Heart left ventricle (tissue), 16 donors: ENCODE measurements at regions of chr17 and their contacts with region 1.

Region 1: DNA sequence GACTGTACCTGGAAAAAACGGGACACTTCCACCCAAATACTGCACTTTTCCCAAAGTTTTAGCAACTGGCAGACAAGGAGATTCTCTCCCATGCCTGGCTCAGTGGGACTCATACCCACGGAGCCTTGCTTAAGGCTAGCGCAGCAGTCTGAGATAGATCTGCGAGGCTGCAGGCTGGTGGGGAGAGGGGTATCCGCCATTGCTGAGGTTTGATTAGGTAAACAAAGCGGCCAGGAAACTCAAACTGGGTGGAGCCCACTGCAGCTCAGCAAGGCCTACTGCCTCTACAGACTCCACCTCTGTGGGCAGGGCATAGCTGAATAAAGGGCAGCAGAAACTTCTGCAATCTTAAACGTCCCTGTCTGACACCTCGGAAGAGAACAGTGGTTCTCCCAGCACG is 44.8 kb downstream of the UTP18 start:
- DNase-seq: no peak
- ATAC-seq: no peak
- H3K4me3 ChIP-seq: no peak overlapping the region
- H3K27ac ChIP-seq: no peak overlapping the region
- H3K4me1 ChIP-seq: no peaks in the 10 kb centered on the region
- H3K27me3 ChIP-seq: no peaks in the 10 kb centered on the region
- CTCF ChIP-seq: no peak
- POLR2A ChIP-seq: no peak

Region 2: GRCh38 chr17:51351890-51352289 is 46.7 kb after region 1 on chr17:
- intact Hi-C with region 1: no loop called
- DNase-seq: peak in 1 of 5 donors; percentile 31
- ATAC-seq: peak in 1 of 4 donors; percentile 48
- H3K4me3 ChIP-seq: no peak overlapping the region
- H3K27ac ChIP-seq: no peak overlapping the region
- H3K4me1 ChIP-seq: peaks cover 0 to 3% (median 0%) of the 10 kb centered on the region in 12 donors
- H3K27me3 ChIP-seq: peaks cover 0 to 5% (median 0%) of the 10 kb centered on the region in 9 donors
- CTCF ChIP-seq: no peak
- POLR2A ChIP-seq: no peak

Region 3: GRCh38 chr17:51548125-51548524 is 242.9 kb after region 1 on chr17:
- intact Hi-C with region 1: no loop called
- DNase-seq: no peak
- ATAC-seq: no peak
- H3K4me3 ChIP-seq: no peak overlapping the region
- H3K27ac ChIP-seq: no peak overlapping the region
- H3K4me1 ChIP-seq: no peaks in the 10 kb centered on the region
- H3K27me3 ChIP-seq: peaks cover 0 to 2% (median 0%) of the 10 kb centered on the region in 9 donors
- CTCF ChIP-seq: no peak
- POLR2A ChIP-seq: no peak

Region 4: GRCh38 chr17:51640108-51640622 is 335.0 kb after region 1 on chr17:
- intact Hi-C with region 1: loop called in 1 of 10 experiments (anchors 10 kb)
- DNase-seq: no peak
- ATAC-seq: no peak
- H3K4me3 ChIP-seq: no peak overlapping the region
- H3K27ac ChIP-seq: no peak overlapping the region
- H3K4me1 ChIP-seq: no peaks in the 10 kb centered on the region
- H3K27me3 ChIP-seq: peaks cover 0 to 21% (median 6%) of the 10 kb centered on the region in 9 donors
- CTCF ChIP-seq: peak in 9 of 12 donors; percentile 9 to 45 (median 29)
- POLR2A ChIP-seq: no peak